Activated CD4-positive, alpha-beta T cell treated with anti-CD3 and anti-CD28 coated beads for 36 hours (primary cell): ENCODE measurements at regions of chr19 and their contacts with region 1.

Region 1: GRCh38 chr19:48835734-48836088 is 580 bp downstream of the HSD17B14 start:
- DNase-seq: peak; percentile 98
- ATAC-seq: peak; percentile 99
- H3K4me3 Mint-ChIP-seq: peak overlapping the region; percentile 71
- H3K27ac Mint-ChIP-seq: peak overlapping the region; percentile 83
- H3K4me1 Mint-ChIP-seq: peaks cover 18% of the 10 kb centered on the region
- H3K27me3 Mint-ChIP-seq: no peaks in the 10 kb centered on the region

Region 2: GRCh38 chr19:48674921-48675824 is 160.5 kb before region 1 on chr19:
- CTCF ChIA-PET with region 1: no interaction called
- POLR2A ChIA-PET with region 1: no interaction called
- intact Hi-C with region 1: loop called in 1 of 2 experiments (anchors 1 kb)
- DNase-seq: peak; percentile 86
- ATAC-seq: peak; percentile 97
- H3K4me3 Mint-ChIP-seq: no peak overlapping the region
- H3K27ac Mint-ChIP-seq: no peak overlapping the region
- H3K4me1 Mint-ChIP-seq: peaks cover 7% of the 10 kb centered on the region
- H3K27me3 Mint-ChIP-seq: no peaks in the 10 kb centered on the region

Region 3: GRCh38 chr19:48746738-48747575 is 88.8 kb before region 1 on chr19 and contains the start of gene IZUMO1:
- CTCF ChIA-PET with region 1: no interaction called
- POLR2A ChIA-PET with region 1: no interaction called
- intact Hi-C with region 1: no loop called
- DNase-seq: peak; percentile 77
- ATAC-seq: peak; percentile 86
- H3K4me3 Mint-ChIP-seq: peak within 1 kb of the TSS; percentile 10
- H3K27ac Mint-ChIP-seq: no peak within 1 kb of the TSS
- H3K4me1 Mint-ChIP-seq: peaks cover 16% of the 10 kb centered on the region
- H3K27me3 Mint-ChIP-seq: peaks cover 14% of the 10 kb centered on the region
- total RNA-seq, gene IZUMO1: not detected

Region 4: GRCh38 chr19:48812094-48812929 is 23.4 kb before region 1 on chr19:
- CTCF ChIA-PET with region 1: interaction called, 3 read pairs
- POLR2A ChIA-PET with region 1: no interaction called
- intact Hi-C with region 1: loop called in 1 of 2 experiments (anchors 1 kb)
- DNase-seq: peak; percentile 78
- ATAC-seq: peak; percentile 40
- H3K4me3 Mint-ChIP-seq: peak overlapping the region; percentile 85
- H3K27ac Mint-ChIP-seq: peak overlapping the region; percentile 37
- H3K4me1 Mint-ChIP-seq: peaks cover 29% of the 10 kb centered on the region
- H3K27me3 Mint-ChIP-seq: no peaks in the 10 kb centered on the region

Region 5: GRCh38 chr19:48970923-48971395 is 135.2 kb after region 1 on chr19:
- CTCF ChIA-PET with region 1: interaction called, 7 read pairs
- POLR2A ChIA-PET with region 1: no interaction called
- intact Hi-C with region 1: loop called in 1 of 2 experiments (anchors 1 kb)
- DNase-seq: peak; percentile 91
- ATAC-seq: peak; percentile 84
- H3K4me3 Mint-ChIP-seq: no peak overlapping the region
- H3K27ac Mint-ChIP-seq: no peak overlapping the region
- H3K4me1 Mint-ChIP-seq: peaks cover 17% of the 10 kb centered on the region
- H3K27me3 Mint-ChIP-seq: no peaks in the 10 kb centered on the region

Region 6: GRCh38 chr19:49057636-49058234 is 222.0 kb after region 1 on chr19 and contains the start of gene CGB7:
- CTCF ChIA-PET with region 1: no interaction called
- POLR2A ChIA-PET with region 1: no interaction called
- intact Hi-C with region 1: no loop called
- DNase-seq: peak; percentile 64
- ATAC-seq: peak; percentile 33
- H3K4me3 Mint-ChIP-seq: peak within 1 kb of the TSS; percentile 56
- H3K27ac Mint-ChIP-seq: no peak within 1 kb of the TSS
- H3K4me1 Mint-ChIP-seq: peaks cover 20% of the 10 kb centered on the region
- H3K27me3 Mint-ChIP-seq: peaks cover 35% of the 10 kb centered on the region
- total RNA-seq, gene CGB7: 0.40 TPM in 1 of 2 experiments, not detected in the other